ENCODE measurements at regions of chr11 and their contacts with region 1.

Region 1: GRCh38 chr11:91850021-91850420 is 374.6 kb upstream of the FAT3 start:
- DNase-seq: no peak
- H3K4me3 ChIP-seq: no peak overlapping the region
- H3K27ac ChIP-seq: no peak overlapping the region
- H3K4me1 ChIP-seq: no peaks in the 10 kb centered on the region
- CTCF ChIP-seq: no peak

Region 2: GRCh38 chr11:91837411-91838330 is 12.3 kb before region 1 on chr11:
- CTCF ChIA-PET with region 1: no interaction called
- POLR2A ChIA-PET with region 1: no interaction called
- intact Hi-C with region 1: no loop called
- DNase-seq: no peak
- H3K4me3 ChIP-seq: no peak overlapping the region
- H3K27ac ChIP-seq: no peak overlapping the region
- H3K4me1 ChIP-seq: no peaks in the 10 kb centered on the region
- CTCF ChIP-seq: no peak

Region 3: DNA sequence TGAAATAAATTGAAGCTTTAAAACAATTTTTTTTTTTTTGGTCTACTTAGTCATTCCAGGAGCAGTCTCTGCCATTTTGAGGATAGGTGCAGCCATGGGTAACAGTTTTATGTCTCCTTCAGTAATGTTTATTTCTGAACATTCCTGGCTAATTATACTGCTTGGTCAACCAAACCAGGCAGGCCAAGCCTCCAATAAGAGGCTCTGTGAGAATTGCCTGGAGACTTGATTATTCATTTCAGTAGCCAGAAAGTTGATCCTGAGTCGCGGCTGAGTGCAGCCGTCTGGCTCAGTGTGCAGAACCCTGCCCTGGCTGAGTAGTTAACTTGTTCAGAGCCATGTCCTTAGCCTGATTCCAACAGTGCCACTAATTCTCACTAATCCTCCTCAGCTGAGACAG is 10.6 kb after region 1 on chr11:
- CTCF ChIA-PET with region 1: no interaction called
- POLR2A ChIA-PET with region 1: interaction called, 13 read pairs
- intact Hi-C with region 1: no loop called
- DNase-seq: no peak
- H3K4me3 ChIP-seq: no peak overlapping the region
- H3K27ac ChIP-seq: no peak overlapping the region
- H3K4me1 ChIP-seq: no peaks in the 10 kb centered on the region
- CTCF ChIP-seq: no peak

Region 4: DNA sequence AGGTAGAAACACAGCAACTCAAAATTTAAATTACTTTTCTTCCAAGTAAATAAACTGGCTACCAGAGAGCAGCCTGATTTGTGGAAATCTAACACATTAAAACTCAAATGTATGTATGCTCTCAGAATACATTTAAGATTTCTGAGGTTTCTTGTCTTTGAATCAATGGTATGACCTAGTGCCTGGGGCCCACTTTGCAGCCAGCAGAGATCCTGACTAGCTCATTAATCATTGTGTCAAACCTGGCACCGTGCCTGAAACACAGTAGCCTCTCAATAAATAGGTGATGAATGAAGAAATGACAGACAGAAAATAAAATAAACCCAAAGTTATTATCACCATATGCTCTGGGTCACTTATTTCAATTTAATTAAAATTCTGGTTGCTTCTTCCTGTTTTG is 198.4 kb after region 1 on chr11:
- CTCF ChIA-PET with region 1: no interaction called
- POLR2A ChIA-PET with region 1: no interaction called
- intact Hi-C with region 1: no loop called
- DNase-seq: no peak
- H3K4me3 ChIP-seq: no peak overlapping the region
- H3K27ac ChIP-seq: no peak overlapping the region
- H3K4me1 ChIP-seq: no peaks in the 10 kb centered on the region
- CTCF ChIP-seq: no peak

Region 5: DNA sequence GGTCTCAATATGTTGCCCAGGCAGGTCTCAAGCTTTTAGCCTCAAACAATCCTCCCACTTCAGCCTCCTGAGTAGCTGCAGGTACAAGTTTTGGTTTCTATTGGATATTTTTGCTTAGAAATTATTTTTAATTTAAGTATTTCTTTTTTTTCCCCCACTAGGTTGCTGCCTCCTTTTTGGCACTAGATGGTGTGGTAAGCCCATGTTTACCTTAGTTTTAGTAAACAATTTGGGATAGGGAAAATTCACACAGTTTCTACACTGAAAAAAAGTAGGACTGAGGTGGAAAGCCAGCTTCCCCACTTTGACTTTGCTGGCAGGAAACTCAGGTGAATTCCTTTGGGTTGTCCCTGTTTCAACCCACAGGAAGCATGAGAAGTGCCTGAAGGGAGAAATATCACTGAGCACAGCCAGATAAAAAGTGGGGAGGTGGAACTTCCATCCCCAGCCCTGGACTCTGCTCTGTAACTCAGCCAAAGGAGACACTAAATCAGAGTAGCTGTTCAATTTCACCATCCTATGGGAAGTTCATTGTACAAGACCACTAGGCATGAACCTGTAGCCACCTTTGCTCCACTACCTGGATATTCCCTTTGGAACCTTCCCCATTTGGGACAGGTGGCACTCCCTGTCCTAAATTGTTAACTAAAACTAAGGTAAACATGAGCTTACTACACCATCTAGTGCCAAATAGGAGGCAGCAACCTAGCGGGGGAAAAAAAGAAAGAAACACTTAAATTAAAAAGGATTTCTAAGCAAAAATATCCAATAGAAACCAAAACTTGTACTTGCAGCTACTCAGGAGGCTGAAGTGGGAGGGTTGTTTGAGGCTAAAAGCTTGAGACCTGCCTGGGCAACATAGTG is 220.2 kb after region 1 on chr11:
- CTCF ChIA-PET with region 1: no interaction called
- POLR2A ChIA-PET with region 1: no interaction called
- intact Hi-C with region 1: no loop called
- DNase-seq: no peak
- H3K4me3 ChIP-seq: no peak overlapping the region
- H3K27ac ChIP-seq: no peak overlapping the region
- H3K4me1 ChIP-seq: no peaks in the 10 kb centered on the region
- CTCF ChIP-seq: no peak